K562 (cell line): ENCODE measurements at regions of chr11 and their contacts with region 1.

Region 1: GRCh38 chr11:66311965-66312548 is 4.8 kb downstream of the CD248 start:
- DNase-seq: peak; percentile 90 to 94 (median 90)
- ATAC-seq: peak; percentile 88
- H3K4me3 ChIP-seq: peak overlapping the region; percentile 49
- H3K27ac ChIP-seq: peak overlapping the region; percentile 44; the same call in 2 of the 3 replicates
- H3K4me1 ChIP-seq: peaks cover 23 to 59% of the 10 kb centered on the region in 2 experiments
- H3K27me3 ChIP-seq: no peaks in the 10 kb centered on the region
- CTCF ChIP-seq: peak; percentile 11 to 97 (median 96); a peak in 5 of 6 replicates
- EP300 ChIP-seq: no peak
- POLR2A ChIP-seq: no peak; the same call in 1 of the 2 replicates
- RAD21 ChIP-seq: peak; percentile 99

Region 2: GRCh38 chr11:66288671-66289547 is 23.1 kb before region 1 on chr11 and contains the start of gene YIF1A:
- CTCF ChIA-PET with region 1: no interaction called
- POLR2A ChIA-PET with region 1: interaction called, 16 read pairs
- in situ Hi-C with region 1: no loop called
- intact Hi-C with region 1: no loop called
- DNase-seq: peak; percentile 96 to 100 (median 98)
- ATAC-seq: peak; percentile 98
- H3K4me3 ChIP-seq: peak within 1 kb of the TSS; percentile 84
- H3K27ac ChIP-seq: peak within 1 kb of the TSS; percentile 80
- H3K4me1 ChIP-seq: peaks cover 19 to 61% of the 10 kb centered on the region in 2 experiments
- H3K27me3 ChIP-seq: no peaks in the 10 kb centered on the region
- CTCF ChIP-seq: peak in 2 of 3 experiments; percentile 30 to 39; a peak in 4 of 6 replicates
- EP300 ChIP-seq: no peak
- POLR2A ChIP-seq: peak; percentile 91
- RAD21 ChIP-seq: no peak; a peak in 1 of 4 replicates
- polyA plus RNA-seq, gene YIF1A: 8.6 to 33.6 TPM

Region 3: DNA sequence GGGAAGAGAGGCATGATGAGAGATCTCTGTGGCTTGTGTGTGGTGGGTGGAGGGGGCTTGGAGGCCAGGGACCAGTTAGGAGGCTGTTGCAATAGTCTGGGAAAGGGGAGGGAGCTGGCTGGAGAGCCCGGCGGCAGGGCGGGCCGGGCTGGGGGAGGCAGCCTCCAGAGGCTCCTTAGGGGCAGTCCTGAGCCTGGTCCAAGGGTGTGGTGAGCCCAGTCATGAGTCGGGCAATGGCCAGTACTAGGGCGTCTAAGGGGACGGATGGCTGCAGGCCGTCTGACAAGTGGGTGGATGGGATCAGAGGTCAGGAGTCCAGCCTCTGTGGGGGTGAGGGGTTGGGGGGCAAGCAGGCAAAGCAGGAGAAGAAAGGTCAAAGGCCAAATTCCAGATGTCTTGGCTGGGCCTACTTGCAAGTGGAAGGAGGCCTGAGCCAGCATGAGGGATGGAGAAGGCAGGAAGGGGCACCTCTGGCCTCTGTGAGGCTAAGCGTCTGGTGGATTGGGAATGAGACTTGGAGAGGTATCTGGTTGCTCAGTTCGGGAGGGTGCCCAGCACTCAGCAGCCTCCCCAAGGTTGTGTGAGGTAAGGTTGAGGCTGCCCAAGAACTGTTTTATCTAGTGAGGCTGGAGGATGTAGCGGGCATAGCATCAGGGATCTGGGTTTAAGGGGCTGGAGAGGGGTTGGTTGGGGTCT is 10.8 kb after region 1 on chr11:
- CTCF ChIA-PET with region 1: interaction called, 37 read pairs
- POLR2A ChIA-PET with region 1: interaction called, 9 read pairs
- in situ Hi-C with region 1: no loop called
- intact Hi-C with region 1: loop called (anchors 1 kb)
- DNase-seq: peak in 1 of 4 experiments; percentile 44
- ATAC-seq: no peak
- H3K4me3 ChIP-seq: no peak overlapping the region
- H3K27ac ChIP-seq: no peak overlapping the region
- H3K4me1 ChIP-seq: peaks cover 3 to 46% of the 10 kb centered on the region in 2 experiments; a peak in 3 of 5 replicates
- H3K27me3 ChIP-seq: no peaks in the 10 kb centered on the region
- CTCF ChIP-seq: no peak
- EP300 ChIP-seq: no peak
- POLR2A ChIP-seq: no peak
- RAD21 ChIP-seq: no peak

Region 4: GRCh38 chr11:66328307-66329144 is 16.5 kb after region 1 on chr11:
- CTCF ChIA-PET with region 1: interaction called, 37 read pairs
- POLR2A ChIA-PET with region 1: interaction called, 4 read pairs
- in situ Hi-C with region 1: no loop called
- intact Hi-C with region 1: loop called (anchors 1 kb)
- DNase-seq: peak; percentile 85 to 89 (median 86)
- ATAC-seq: peak; percentile 94
- H3K4me3 ChIP-seq: no peak overlapping the region
- H3K27ac ChIP-seq: peak overlapping the region; percentile 75
- H3K4me1 ChIP-seq: peaks cover 20 to 70% of the 10 kb centered on the region in 2 experiments; a peak in 4 of 5 replicates
- H3K27me3 ChIP-seq: no peaks in the 10 kb centered on the region
- CTCF ChIP-seq: peak; percentile 92 to 95 (median 94)
- EP300 ChIP-seq: no peak
- POLR2A ChIP-seq: no peak
- RAD21 ChIP-seq: peak; percentile 86 to 90

Region 5: DNA sequence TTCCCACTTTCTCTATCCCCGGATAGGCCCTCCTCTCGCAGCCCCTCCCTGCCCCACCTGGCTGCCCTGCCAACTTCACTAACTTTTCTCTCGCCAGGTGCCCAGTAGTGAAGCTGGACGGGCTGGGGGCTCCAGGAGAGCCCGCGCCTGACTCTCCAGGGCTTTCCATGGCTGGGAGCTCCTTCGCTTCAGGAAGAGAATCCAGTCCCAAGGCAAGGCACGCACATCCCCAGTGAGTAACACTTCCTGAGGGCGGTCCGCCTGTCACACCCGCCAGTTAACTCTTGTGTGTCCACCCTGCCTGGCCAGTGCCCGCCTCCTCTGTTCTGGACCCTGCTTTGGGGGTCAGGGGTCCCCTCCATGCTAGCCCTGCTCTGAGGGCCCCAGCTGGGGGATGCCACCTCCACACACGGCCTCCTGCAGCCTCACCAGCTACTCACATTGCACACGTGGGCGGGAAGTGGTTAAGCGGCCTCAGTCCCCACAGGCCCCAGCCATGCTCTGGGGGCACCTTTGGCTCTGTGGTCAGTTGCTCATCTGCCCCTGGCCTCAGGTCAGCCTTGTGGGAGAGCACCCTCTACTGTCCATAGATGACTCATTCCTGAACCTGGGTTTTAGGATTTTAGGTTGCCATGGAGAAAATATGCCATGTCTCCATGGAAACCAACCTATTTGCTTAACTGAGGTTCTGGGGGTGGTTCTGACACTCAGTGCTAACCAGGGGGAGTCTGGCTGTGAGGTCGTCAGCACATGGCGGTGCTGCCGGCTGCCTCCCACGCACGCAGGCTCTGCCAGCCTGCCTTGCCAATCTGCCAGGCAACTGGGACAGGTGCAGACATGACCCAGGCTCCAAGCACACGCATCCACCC is 24.4 kb after region 1 on chr11 and contains the start of gene RIN1:
- CTCF ChIA-PET with region 1: interaction called, 8 read pairs
- POLR2A ChIA-PET with region 1: interaction called, 4 read pairs
- in situ Hi-C with region 1: no loop called
- intact Hi-C with region 1: loop called (anchors 1 kb)
- DNase-seq: peak; percentile 81 to 85 (median 84)
- ATAC-seq: peak; percentile 89
- H3K4me3 ChIP-seq: no peak within 1 kb of the TSS
- H3K27ac ChIP-seq: no peak within 1 kb of the TSS
- H3K4me1 ChIP-seq: peaks cover 7 to 55% of the 10 kb centered on the region in 2 experiments; a peak in 4 of 5 replicates
- H3K27me3 ChIP-seq: no peaks in the 10 kb centered on the region
- CTCF ChIP-seq: peak; percentile 73 to 86 (median 80)
- EP300 ChIP-seq: peak; percentile 5; the same call in 1 of the 2 replicates
- POLR2A ChIP-seq: peak; percentile 45; the same call in 1 of the 2 replicates
- RAD21 ChIP-seq: peak; percentile 76 to 80
- polyA plus RNA-seq, gene RIN1: 0.01 TPM in 1 of 2 experiments, not detected in the other

Region 6: GRCh38 chr11:66386171-66387069 is 74.4 kb after region 1 on chr11:
- CTCF ChIA-PET with region 1: interaction called, 6 read pairs
- POLR2A ChIA-PET with region 1: interaction called, 3 read pairs
- in situ Hi-C with region 1: no loop called
- intact Hi-C with region 1: loop called (anchors 2 kb)
- DNase-seq: peak; percentile 55 to 90 (median 62)
- ATAC-seq: peak; percentile 87
- H3K4me3 ChIP-seq: no peak overlapping the region; the same call in 1 of the 2 replicates
- H3K27ac ChIP-seq: no peak overlapping the region
- H3K4me1 ChIP-seq: peaks cover 0 to 5% of the 10 kb centered on the region in 2 experiments; a peak in 2 of 5 replicates
- H3K27me3 ChIP-seq: peaks cover 0 to 7% of the 10 kb centered on the region in 2 experiments; a peak in 2 of 5 replicates
- CTCF ChIP-seq: peak; percentile 85 to 95 (median 94)
- EP300 ChIP-seq: no peak
- POLR2A ChIP-seq: no peak
- RAD21 ChIP-seq: peak; percentile 64 to 78